Dendritic cell treated with granulocyte-macrophage colony-stimulating factor and Interleukin-4, amounts not matched to agents 40 ng/mL and 50 ng/mL, for 4 days (primary cell): ENCODE measurements at regions of chr19 and their contacts with region 1.

Region 1: DNA sequence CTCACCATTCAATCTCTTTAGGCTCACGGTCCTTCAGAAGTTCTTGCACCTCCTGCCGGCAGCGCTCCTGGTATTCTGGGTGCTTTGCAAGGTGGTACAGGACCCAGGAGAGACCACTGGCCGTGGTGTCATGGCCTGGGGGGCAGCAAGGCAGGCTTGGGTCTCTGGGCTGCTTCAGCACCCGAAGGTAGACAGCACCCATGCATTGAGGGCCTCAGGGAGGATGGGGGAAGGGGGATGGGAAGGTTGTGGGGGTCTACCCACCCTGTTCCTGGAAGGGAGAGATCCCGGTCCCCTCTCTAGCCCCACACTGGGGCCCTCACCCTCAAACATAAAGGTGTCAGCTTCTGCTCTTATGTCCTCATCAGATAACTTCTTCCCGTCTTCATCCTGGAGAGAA is 12.0 kb downstream of the CYP4F2 start:
- H3K4me3 Mint-ChIP-seq: no peak overlapping the region
- H3K27ac Mint-ChIP-seq: no peak overlapping the region
- H3K4me1 Mint-ChIP-seq: no peaks in the 10 kb centered on the region
- H3K27me3 Mint-ChIP-seq: no peaks in the 10 kb centered on the region

Region 2: GRCh38 chr19:15905026-15905425 is 19.1 kb after region 1 on chr19:
- intact Hi-C with region 1: loop called (anchors 2 kb)
- H3K4me3 Mint-ChIP-seq: no peak overlapping the region
- H3K27ac Mint-ChIP-seq: no peak overlapping the region
- H3K4me1 Mint-ChIP-seq: peaks cover 4% of the 10 kb centered on the region
- H3K27me3 Mint-ChIP-seq: peaks cover 4% of the 10 kb centered on the region